ENCODE measurements at regions of chr3 and their contacts with region 1.

Region 1: DNA sequence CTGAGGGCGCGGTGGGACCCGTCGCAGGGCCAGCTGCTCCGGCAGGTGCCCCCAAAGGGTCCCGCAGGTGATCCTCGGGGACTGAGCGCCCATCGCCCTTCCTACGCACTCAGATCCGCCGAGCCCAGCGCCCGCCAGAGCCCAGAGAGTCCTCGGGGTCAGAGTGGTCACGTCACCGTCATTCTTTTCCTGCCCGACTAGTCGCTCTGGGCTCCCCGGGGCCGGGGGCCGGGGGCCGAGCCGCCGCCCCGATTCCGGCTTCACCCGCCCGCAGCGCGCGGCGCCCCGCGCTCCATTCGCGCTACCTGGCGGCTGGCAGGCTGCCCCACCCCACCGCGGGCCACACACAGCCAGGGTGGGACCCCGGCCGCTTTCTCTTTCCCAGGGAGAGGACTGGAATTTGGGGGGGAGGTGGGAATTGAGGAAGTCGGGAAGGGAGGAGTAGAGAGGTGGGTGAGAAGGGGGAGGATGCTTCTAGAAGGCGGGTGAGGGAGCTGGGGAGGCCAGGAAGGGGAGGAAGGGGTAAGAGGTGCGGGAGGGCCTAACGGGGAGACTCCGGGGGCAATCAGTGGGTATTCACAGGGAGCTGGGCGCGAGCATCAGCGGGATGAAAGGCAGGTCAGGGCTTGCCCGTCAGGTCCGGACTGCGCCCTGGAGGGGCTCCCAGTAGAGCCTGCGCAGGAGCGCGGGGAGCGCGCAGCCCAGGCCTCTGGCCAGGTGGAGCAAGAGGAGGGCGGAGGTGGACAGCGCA is 36.1 kb upstream of the EPHB3 start:
- DNase-seq: peak in 4 of 35 experiments; percentile 11 to 29 (median 22)
- ATAC-seq: peak; percentile 64 to 76 (median 72)
- H3K4me3 ChIP-seq: peak overlapping the region; percentile 57 to 79
- H3K4me3 Mint-ChIP-seq: peak overlapping the region; percentile 80 to 87 (median 84)
- H3K27ac ChIP-seq: no peak overlapping the region
- H3K27ac Mint-ChIP-seq: peak overlapping the region in 1 of 2 donors; percentile 55
- H3K4me1 ChIP-seq: peaks cover 0 to 8% of the 10 kb centered on the region in 2 experiments
- H3K4me1 Mint-ChIP-seq: peaks cover 11 to 17% (median 14%) of the 10 kb centered on the region in 3 donors
- H3K27me3 ChIP-seq: peaks cover 0 to 34% of the 10 kb centered on the region in 2 experiments
- H3K27me3 Mint-ChIP-seq: peaks cover 10 to 44% of the 10 kb centered on the region in 2 donors

Region 2: DNA sequence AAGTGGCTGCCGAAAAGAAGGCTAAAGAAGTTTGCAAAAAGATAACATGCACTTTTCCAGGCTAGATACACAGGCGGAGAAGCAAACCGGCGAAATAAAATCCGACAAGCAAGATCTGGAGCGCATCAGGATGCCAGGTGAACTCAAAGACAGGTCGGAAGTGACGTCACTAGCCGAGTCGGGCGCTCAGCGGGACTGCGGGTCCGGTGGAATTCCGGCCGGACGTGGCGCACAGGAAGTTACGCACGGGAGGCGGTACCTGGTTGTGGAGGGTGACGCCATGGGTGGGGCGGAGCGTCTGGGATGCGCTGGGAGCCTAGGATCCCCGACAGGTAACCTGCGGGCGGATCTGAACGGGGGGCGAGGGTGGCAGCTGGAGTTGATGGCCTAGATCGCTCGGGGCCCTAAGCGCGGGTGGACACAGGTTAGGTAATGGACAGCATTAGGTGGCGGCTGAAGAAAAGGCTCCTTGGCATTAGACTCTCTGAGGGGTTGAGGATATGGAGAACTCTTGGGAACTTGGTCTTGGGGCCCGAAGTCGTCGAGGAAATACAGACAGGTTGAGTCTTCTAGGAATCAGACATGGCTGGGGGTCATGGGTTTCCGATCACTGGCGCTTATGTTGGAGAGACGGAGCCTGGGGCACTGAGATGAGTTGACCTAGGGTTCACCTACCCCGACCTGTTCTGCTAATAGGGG is 757.3 kb after region 1 on chr3:
- CTCF ChIA-PET with region 1: no interaction called
- POLR2A ChIA-PET with region 1: interaction called in 1 of 2 experiments, 11 read pairs
- DNase-seq: peak; percentile 76 to 98 (median 92)
- ATAC-seq: peak; percentile 98 to 99 (median 99)
- H3K4me3 ChIP-seq: peak overlapping the region; percentile 83 to 94
- H3K4me3 Mint-ChIP-seq: peak overlapping the region; percentile 83 to 94 (median 92)
- H3K27ac ChIP-seq: peak overlapping the region; percentile 69
- H3K27ac Mint-ChIP-seq: peak overlapping the region; percentile 82 to 91
- H3K4me1 ChIP-seq: peaks cover 2 to 16% of the 10 kb centered on the region in 2 experiments
- H3K4me1 Mint-ChIP-seq: peaks cover 16 to 22% (median 20%) of the 10 kb centered on the region in 3 donors
- H3K27me3 ChIP-seq: peaks cover 0 to 8% of the 10 kb centered on the region in 2 experiments
- H3K27me3 Mint-ChIP-seq: peaks cover 24 to 26% of the 10 kb centered on the region in 2 donors

Measured in T-cell (primary cell).